Activated CD4-positive, alpha-beta T cell treated with anti-CD3 and anti-CD28 coated beads, Interleukin-2, amount 10 ng/mL, durations not matched to agents 7 days and 5 days (primary cell): ENCODE measurements at regions of chr1 and their contacts with region 1.

Region 1: GRCh38 chr1:223794136-223794880 is 51.4 kb downstream of the TP53BP2 start:
- DNase-seq: no peak
- H3K4me3 Mint-ChIP-seq: no peak overlapping the region
- H3K27ac Mint-ChIP-seq: no peak overlapping the region
- H3K4me1 Mint-ChIP-seq: peaks cover 6% of the 10 kb centered on the region
- H3K27me3 Mint-ChIP-seq: no peaks in the 10 kb centered on the region

Region 2: DNA sequence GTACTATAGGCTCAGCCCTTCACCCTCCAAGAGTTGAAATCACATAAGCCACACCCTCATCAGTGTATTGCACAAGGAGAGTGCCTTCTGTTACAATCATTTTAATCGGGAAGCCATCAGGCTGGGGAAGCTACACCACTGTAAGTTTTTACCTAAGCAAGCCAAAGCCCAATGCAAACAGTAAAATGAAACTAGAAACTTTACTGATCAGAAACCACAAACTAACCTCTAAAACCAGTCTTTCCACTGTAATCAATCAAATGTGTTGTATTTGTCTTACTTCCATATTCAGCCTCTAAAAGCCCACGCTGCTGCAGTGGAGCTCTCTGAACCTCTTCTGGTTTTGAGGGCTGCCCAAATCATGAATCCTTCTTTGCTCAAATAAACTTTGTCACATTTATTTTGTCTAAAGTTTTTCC is 155.0 kb before region 1 on chr1:
- CTCF ChIA-PET with region 1: no interaction called
- POLR2A ChIA-PET with region 1: no interaction called
- DNase-seq: peak; percentile 19
- H3K4me3 Mint-ChIP-seq: no peak overlapping the region
- H3K27ac Mint-ChIP-seq: peak overlapping the region; percentile 62
- H3K4me1 Mint-ChIP-seq: peaks cover 11% of the 10 kb centered on the region
- H3K27me3 Mint-ChIP-seq: peaks cover 25% of the 10 kb centered on the region

Region 3: GRCh38 chr1:223652436-223652941 is 141.8 kb before region 1 on chr1:
- CTCF ChIA-PET with region 1: no interaction called
- POLR2A ChIA-PET with region 1: no interaction called
- DNase-seq: no peak
- H3K4me3 Mint-ChIP-seq: no peak overlapping the region
- H3K27ac Mint-ChIP-seq: no peak overlapping the region
- H3K4me1 Mint-ChIP-seq: peaks cover 4% of the 10 kb centered on the region
- H3K27me3 Mint-ChIP-seq: peaks cover 9% of the 10 kb centered on the region

Region 4: DNA sequence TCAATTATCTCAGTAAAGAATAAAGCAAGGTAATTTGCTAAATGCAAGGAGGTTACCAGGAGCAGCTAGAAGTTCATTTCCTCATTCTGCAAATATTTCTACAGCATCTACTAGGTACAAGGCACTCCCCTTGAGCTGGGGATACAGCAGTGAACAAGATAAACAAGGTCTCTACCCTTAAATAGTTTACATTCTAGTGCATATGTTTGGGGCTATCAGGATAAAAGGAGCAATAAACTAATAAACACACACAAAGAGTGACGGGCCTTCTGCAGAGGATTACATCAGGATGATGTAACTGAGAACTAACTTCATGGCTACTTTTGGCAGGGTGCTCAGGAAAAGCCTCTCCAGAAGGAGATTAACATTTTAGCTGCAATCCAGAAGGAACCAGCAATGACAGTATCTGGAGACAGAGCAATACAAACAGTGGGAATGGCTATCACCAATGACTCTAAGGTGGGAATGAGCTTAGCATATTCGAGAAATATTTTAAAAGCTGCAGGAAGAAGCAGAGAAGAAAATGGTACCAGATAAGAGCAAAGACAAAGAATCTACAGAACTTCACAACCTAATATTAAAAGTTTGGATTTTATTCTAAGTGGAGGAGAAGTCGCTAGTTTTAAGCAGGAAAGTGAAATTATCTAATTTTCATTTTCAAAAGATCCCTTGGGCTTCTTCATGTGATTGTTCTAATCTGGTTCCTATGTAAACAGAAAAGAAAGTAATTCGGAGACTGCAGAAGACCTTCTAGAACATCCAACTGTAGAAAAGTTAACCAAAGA is 25.6 kb after region 1 on chr1:
- CTCF ChIA-PET with region 1: no interaction called
- POLR2A ChIA-PET with region 1: no interaction called
- DNase-seq: no peak
- H3K4me3 Mint-ChIP-seq: no peak overlapping the region
- H3K27ac Mint-ChIP-seq: no peak overlapping the region
- H3K4me1 Mint-ChIP-seq: peaks cover 26% of the 10 kb centered on the region
- H3K27me3 Mint-ChIP-seq: no peaks in the 10 kb centered on the region

Region 5: GRCh38 chr1:224106568-224107281 is 312.4 kb after region 1 on chr1:
- CTCF ChIA-PET with region 1: no interaction called
- POLR2A ChIA-PET with region 1: interaction called, 11 read pairs
- DNase-seq: peak; percentile 46
- H3K4me3 Mint-ChIP-seq: no peak overlapping the region
- H3K27ac Mint-ChIP-seq: no peak overlapping the region
- H3K4me1 Mint-ChIP-seq: peaks cover 7% of the 10 kb centered on the region
- H3K27me3 Mint-ChIP-seq: peaks cover 45% of the 10 kb centered on the region